ENCODE measurements at regions of chr6 and their contacts with region 1.

Region 1: DNA sequence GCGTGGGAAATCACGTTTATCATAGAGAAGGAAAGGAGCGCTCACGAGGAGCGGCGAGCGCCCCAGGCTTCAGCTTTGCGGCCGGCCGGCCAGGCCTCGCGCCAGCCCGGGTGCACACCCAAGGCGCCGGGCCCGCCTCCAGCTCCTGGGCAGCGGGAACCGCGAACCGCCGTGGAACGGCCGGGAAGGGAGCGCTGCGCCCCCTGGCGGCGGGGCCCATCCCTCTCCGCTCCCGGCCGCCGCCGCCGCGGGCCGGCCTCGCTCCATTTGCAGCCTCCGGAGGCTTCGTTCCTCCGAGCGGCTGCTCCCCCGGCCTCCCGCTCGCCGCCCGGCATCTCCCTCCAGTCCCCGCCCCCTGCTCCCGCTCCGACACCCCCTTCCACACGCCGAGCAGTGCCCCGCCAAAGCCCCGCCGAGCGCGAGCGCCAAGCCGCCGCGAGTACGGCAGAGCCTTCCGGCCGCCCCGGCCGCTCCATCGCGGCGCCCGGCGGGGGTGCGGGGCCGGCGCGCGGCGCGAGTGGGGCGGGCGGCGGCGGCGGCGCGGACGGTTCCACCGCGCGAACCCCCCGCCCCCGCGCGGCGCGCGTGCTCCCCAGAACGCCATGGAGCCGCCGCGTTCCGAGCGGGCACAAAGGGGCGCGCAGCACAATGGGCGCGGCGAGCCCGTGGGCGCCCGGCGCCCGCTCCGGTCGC is 956 bp downstream of the BEND3 start:
- DNase-seq: peak; percentile 57 to 67 (median 66)
- H3K4me3 ChIP-seq: peak overlapping the region; percentile 58
- H3K4me3 Mint-ChIP-seq: peak overlapping the region; percentile 77 to 92 (median 82)
- H3K27ac ChIP-seq: no peak overlapping the region
- H3K27ac Mint-ChIP-seq: no peak overlapping the region
- H3K4me1 ChIP-seq: peaks cover 7% of the 10 kb centered on the region
- H3K4me1 Mint-ChIP-seq: peaks cover 13 to 18% (median 14%) of the 10 kb centered on the region in 3 donors
- H3K27me3 ChIP-seq: no peaks in the 10 kb centered on the region
- H3K27me3 Mint-ChIP-seq: peaks cover 11 to 12% of the 10 kb centered on the region in 2 donors

Region 2: GRCh38 chr6:107098436-107099307 is 15.7 kb before region 1 on chr6:
- CTCF ChIA-PET with region 1: interaction called, 11 read pairs
- POLR2A ChIA-PET with region 1: no interaction called
- DNase-seq: no peak
- H3K4me3 ChIP-seq: no peak overlapping the region
- H3K4me3 Mint-ChIP-seq: no peak overlapping the region
- H3K27ac ChIP-seq: no peak overlapping the region
- H3K27ac Mint-ChIP-seq: peak overlapping the region in 1 of 8 donors; percentile 11
- H3K4me1 ChIP-seq: no peaks in the 10 kb centered on the region
- H3K4me1 Mint-ChIP-seq: no peaks in the 10 kb centered on the region
- H3K27me3 ChIP-seq: no peaks in the 10 kb centered on the region
- H3K27me3 Mint-ChIP-seq: no peaks in the 10 kb centered on the region

Region 3: DNA sequence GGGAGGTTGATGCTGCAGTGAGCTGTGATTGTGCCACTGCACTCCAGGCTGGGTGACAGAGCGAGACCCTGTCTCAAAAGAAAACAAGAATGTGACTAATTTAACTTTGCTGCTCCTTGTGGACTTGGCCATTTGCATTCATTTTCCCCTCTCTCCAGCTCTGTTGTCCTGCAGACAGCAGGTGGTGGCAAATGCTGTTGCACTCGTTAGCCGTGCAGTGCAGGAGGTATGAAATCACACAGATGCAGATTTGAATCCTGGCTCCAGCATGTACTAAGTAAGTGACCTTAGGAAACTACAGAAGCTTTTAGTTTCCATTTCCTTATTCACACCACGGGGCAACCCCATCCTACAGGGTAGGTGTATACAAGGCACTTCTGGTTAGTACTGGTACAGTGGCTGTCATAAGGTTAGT is 10.6 kb after region 1 on chr6:
- CTCF ChIA-PET with region 1: interaction called, 17 read pairs
- POLR2A ChIA-PET with region 1: interaction called, 6 read pairs
- DNase-seq: no peak
- H3K4me3 ChIP-seq: no peak overlapping the region
- H3K4me3 Mint-ChIP-seq: no peak overlapping the region
- H3K27ac ChIP-seq: no peak overlapping the region
- H3K27ac Mint-ChIP-seq: peak overlapping the region in 1 of 8 donors; percentile 54
- H3K4me1 ChIP-seq: no peaks in the 10 kb centered on the region
- H3K4me1 Mint-ChIP-seq: no peaks in the 10 kb centered on the region
- H3K27me3 ChIP-seq: no peaks in the 10 kb centered on the region
- H3K27me3 Mint-ChIP-seq: peaks cover 0 to 8% of the 10 kb centered on the region in 2 donors

Measured in CD8-positive, alpha-beta memory T cell (primary cell).